IMR-90 (cell line): ENCODE measurements at regions of chr1 and their contacts with region 1.

Region 1: GRCh38 chr1:30718636-30719405 is 4.6 kb downstream of the MATN1 start:
- DNase-seq: peak; percentile 98
- ATAC-seq: peak; percentile 82
- H3K4me3 ChIP-seq: peak overlapping the region; percentile 50
- H3K27ac ChIP-seq: peak overlapping the region; percentile 84
- H3K4me1 ChIP-seq: peaks cover 4% of the 10 kb centered on the region; the same call in 1 of the 2 replicates
- H3K27me3 ChIP-seq: no peaks in the 10 kb centered on the region
- CTCF ChIP-seq: peak; percentile 88; the same call in 1 of the 2 replicates
- POLR2A ChIP-seq: peak; percentile 73
- RAD21 ChIP-seq: 0 out of 2 replicates have a peak, but pooled peaks have one; percentile 97

Region 2: GRCh38 chr1:29230553-29231378 is 1488.1 kb before region 1 on chr1 and contains the start of gene MECR:
- CTCF ChIA-PET with region 1: no interaction called
- POLR2A ChIA-PET with region 1: no interaction called
- dilution Hi-C with region 1: no loop called
- in situ Hi-C with region 1: loop called (anchors 10 kb)
- intact Hi-C with region 1: no loop called
- DNase-seq: peak; percentile 89
- ATAC-seq: peak; percentile 99
- H3K4me3 ChIP-seq: peak within 1 kb of the TSS; percentile 79
- H3K27ac ChIP-seq: peak within 1 kb of the TSS; percentile 54
- H3K4me1 ChIP-seq: peaks cover 2% of the 10 kb centered on the region; the same call in 1 of the 2 replicates
- H3K27me3 ChIP-seq: peaks cover 2% of the 10 kb centered on the region; the same call in 1 of the 2 replicates
- CTCF ChIP-seq: peak; percentile 18; the same call in 1 of the 2 replicates
- POLR2A ChIP-seq: peak; percentile 80
- RAD21 ChIP-seq: no peak
- total RNA-seq, gene MECR: 19.2 and 20.3 TPM in 2 replicates

Region 3: GRCh38 chr1:29960876-29961275 is 757.9 kb before region 1 on chr1:
- CTCF ChIA-PET with region 1: no interaction called
- POLR2A ChIA-PET with region 1: no interaction called
- dilution Hi-C with region 1: no loop called
- in situ Hi-C with region 1: no loop called
- intact Hi-C with region 1: no loop called
- DNase-seq: no peak
- ATAC-seq: no peak
- H3K4me3 ChIP-seq: no peak overlapping the region
- H3K27ac ChIP-seq: no peak overlapping the region
- H3K4me1 ChIP-seq: no peaks in the 10 kb centered on the region
- H3K27me3 ChIP-seq: no peaks in the 10 kb centered on the region; the same call in 1 of the 2 replicates
- CTCF ChIP-seq: no peak
- POLR2A ChIP-seq: no peak
- RAD21 ChIP-seq: no peak

Region 4: GRCh38 chr1:30645807-30646206 is 73.0 kb before region 1 on chr1:
- CTCF ChIA-PET with region 1: no interaction called
- POLR2A ChIA-PET with region 1: no interaction called
- dilution Hi-C with region 1: no loop called
- in situ Hi-C with region 1: no loop called
- intact Hi-C with region 1: no loop called
- DNase-seq: peak; percentile 57
- ATAC-seq: no peak
- H3K4me3 ChIP-seq: no peak overlapping the region
- H3K27ac ChIP-seq: no peak overlapping the region
- H3K4me1 ChIP-seq: no peaks in the 10 kb centered on the region
- H3K27me3 ChIP-seq: peaks cover 8% of the 10 kb centered on the region
- CTCF ChIP-seq: no peak
- POLR2A ChIP-seq: no peak
- RAD21 ChIP-seq: no peak

Region 5: DNA sequence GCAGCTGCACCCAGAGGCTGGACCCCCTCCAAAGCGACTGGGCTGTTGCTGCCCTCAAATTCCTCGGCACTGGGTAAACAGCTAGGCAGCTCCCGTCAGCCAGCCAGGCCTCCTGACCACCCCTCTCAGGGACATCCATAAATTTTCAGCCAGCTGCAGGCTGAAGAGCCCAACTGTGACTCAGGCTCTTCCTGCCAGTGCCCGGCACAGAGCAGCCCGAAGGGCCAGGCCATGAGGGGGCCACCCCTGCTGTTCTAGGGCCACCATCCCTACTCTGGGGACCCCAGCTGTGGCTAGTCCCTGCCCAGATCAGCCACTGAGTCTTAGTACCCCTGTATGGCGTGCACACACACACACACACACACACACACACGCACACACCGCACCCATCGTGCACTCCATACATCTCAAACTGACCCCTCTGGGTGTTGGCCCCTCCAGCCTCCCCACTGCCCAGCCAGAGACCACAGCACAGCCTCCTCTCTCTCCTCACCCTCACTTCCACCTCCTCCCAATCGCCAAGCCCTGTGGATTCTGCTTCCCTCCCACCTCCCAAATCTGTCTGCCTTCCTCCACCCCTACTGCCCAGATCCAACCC is 44.9 kb after region 1 on chr1:
- CTCF ChIA-PET with region 1: interaction called, 3 read pairs
- POLR2A ChIA-PET with region 1: no interaction called
- dilution Hi-C with region 1: no loop called
- in situ Hi-C with region 1: loop called (anchors 5 kb)
- intact Hi-C with region 1: no loop called
- DNase-seq: peak; percentile 48
- ATAC-seq: peak; percentile 85
- H3K4me3 ChIP-seq: no peak overlapping the region
- H3K27ac ChIP-seq: no peak overlapping the region
- H3K4me1 ChIP-seq: peaks cover 9% of the 10 kb centered on the region; the same call in 1 of the 2 replicates
- H3K27me3 ChIP-seq: no peaks in the 10 kb centered on the region; the same call in 1 of the 2 replicates
- CTCF ChIP-seq: no peak
- POLR2A ChIP-seq: no peak
- RAD21 ChIP-seq: no peak

Region 6: DNA sequence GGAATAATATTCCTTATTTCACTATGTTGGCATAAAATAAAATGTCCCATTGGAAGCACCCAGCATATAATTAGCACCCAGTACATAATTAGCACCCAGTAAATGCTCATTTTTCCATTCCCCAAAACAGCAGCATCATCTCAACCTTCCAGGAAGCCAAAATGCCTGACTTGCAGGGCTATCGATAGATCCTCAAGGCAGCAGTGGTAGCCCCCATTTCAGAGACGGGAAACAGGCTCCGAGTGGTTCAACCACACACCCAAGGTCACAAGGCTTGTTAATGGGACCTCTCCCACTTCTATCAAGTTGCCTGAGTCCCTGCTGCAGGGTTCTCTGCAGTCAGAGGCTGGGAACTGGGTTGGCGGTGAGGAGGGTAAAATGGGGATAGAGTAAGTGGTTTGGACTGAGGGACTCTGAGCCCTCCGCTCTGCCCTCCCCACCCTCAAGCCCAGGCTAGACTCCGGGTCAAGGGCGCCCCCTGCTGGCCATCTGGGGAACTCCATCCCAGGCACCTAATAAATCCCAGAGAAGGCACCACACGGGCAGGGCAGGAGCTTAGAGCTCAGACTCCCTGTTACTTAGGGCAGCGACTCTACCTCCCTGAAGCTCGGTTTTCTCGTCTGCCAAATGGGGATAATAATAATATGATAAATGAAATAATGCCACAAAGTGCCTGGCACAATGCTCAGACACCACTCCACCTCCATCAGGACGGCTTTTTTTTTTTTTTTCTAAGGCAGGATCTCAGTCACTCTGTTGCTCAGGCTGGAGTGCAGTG is 60.7 kb after region 1 on chr1:
- CTCF ChIA-PET with region 1: interaction called, 44 read pairs
- POLR2A ChIA-PET with region 1: interaction called, 4 read pairs
- dilution Hi-C with region 1: no loop called
- in situ Hi-C with region 1: no loop called
- intact Hi-C with region 1: loop called (anchors 1 kb)
- DNase-seq: peak; percentile 48
- ATAC-seq: peak; percentile 74
- H3K4me3 ChIP-seq: no peak overlapping the region
- H3K27ac ChIP-seq: no peak overlapping the region
- H3K4me1 ChIP-seq: no peaks in the 10 kb centered on the region
- H3K27me3 ChIP-seq: no peaks in the 10 kb centered on the region; the same call in 1 of the 2 replicates
- CTCF ChIP-seq: peak; percentile 93
- POLR2A ChIP-seq: no peak
- RAD21 ChIP-seq: peak; percentile 84

Region 7: GRCh38 chr1:30895944-30896660 is 177.3 kb after region 1 on chr1:
- CTCF ChIA-PET with region 1: no interaction called
- POLR2A ChIA-PET with region 1: no interaction called
- dilution Hi-C with region 1: no loop called
- in situ Hi-C with region 1: no loop called
- intact Hi-C with region 1: no loop called
- DNase-seq: peak; percentile 21
- ATAC-seq: peak; percentile 21; the same call in 1 of the 2 replicates
- H3K4me3 ChIP-seq: no peak overlapping the region
- H3K27ac ChIP-seq: peak overlapping the region; percentile 50; the same call in 1 of the 2 replicates
- H3K4me1 ChIP-seq: peaks cover 34% of the 10 kb centered on the region
- H3K27me3 ChIP-seq: no peaks in the 10 kb centered on the region
- CTCF ChIP-seq: no peak
- POLR2A ChIP-seq: no peak
- RAD21 ChIP-seq: no peak

Region 8: DNA sequence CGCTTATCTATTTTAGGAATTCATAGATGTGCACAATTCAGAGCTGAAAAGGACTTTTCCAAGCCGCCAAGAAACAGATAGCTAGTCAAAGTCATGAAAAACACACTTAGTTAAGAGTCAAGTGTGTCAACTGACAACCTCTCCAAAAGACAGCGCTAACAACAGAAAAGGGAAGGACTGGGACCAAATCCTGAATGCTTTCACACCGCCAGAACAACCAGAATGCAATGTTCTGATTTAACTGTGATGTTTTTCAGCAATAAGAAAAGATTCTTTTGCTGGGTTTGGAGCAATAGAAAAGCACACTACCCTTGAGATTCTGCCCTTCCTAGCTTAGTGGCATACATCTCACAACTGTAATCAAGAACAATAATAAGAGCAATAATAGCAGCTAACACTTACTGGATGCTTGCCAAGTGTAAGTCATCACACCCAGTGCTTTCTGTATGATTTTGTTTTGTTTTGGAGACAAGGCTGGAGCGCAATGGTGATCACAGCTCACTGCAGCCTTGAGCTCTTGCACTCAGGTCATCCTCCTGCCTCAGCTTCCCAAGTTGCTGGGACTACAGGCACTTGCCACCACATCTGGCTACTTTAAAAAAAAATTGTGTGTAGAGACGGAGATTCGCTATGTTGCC is 223.6 kb after region 1 on chr1:
- CTCF ChIA-PET with region 1: interaction called, 11 read pairs
- POLR2A ChIA-PET with region 1: no interaction called
- dilution Hi-C with region 1: no loop called
- in situ Hi-C with region 1: no loop called
- intact Hi-C with region 1: no loop called
- DNase-seq: no peak
- ATAC-seq: no peak; the same call in 1 of the 2 replicates
- H3K4me3 ChIP-seq: no peak overlapping the region
- H3K27ac ChIP-seq: no peak overlapping the region
- H3K4me1 ChIP-seq: no peaks in the 10 kb centered on the region; the same call in 1 of the 2 replicates
- H3K27me3 ChIP-seq: no peaks in the 10 kb centered on the region
- CTCF ChIP-seq: no peak
- POLR2A ChIP-seq: no peak
- RAD21 ChIP-seq: no peak

Region 9: GRCh38 chr1:30982937-30983336 is 264.1 kb after region 1 on chr1:
- CTCF ChIA-PET with region 1: no interaction called
- POLR2A ChIA-PET with region 1: interaction called, 10 read pairs
- dilution Hi-C with region 1: no loop called
- in situ Hi-C with region 1: no loop called
- intact Hi-C with region 1: no loop called
- DNase-seq: peak; percentile 52
- ATAC-seq: peak; percentile 71
- H3K4me3 ChIP-seq: no peak overlapping the region
- H3K27ac ChIP-seq: no peak overlapping the region
- H3K4me1 ChIP-seq: peaks cover 8% of the 10 kb centered on the region
- H3K27me3 ChIP-seq: no peaks in the 10 kb centered on the region
- CTCF ChIP-seq: peak; percentile 31; the same call in 1 of the 2 replicates
- POLR2A ChIP-seq: no peak
- RAD21 ChIP-seq: no peak